Activated CD8-positive, alpha-beta T cell treated with anti-CD3 and anti-CD28 coated beads, Interleukin-2, amount 10 ng/mL, durations not matched to agents 7 days and 5 days (primary cell): ENCODE measurements at regions of chr20 and their contacts with region 1.

Region 1: GRCh38 chr20:5191829-5192569 is 65.2 kb downstream of the CDS2 start:
- DNase-seq: peak; percentile 62
- ATAC-seq: peak; percentile 65
- H3K4me3 Mint-ChIP-seq: no peak overlapping the region
- H3K27ac Mint-ChIP-seq: peak overlapping the region; percentile 60
- H3K4me1 Mint-ChIP-seq: peaks cover 9% of the 10 kb centered on the region
- H3K27me3 Mint-ChIP-seq: no peaks in the 10 kb centered on the region

Region 2: GRCh38 chr20:5056801-5057599 is 135.0 kb before region 1 on chr20:
- CTCF ChIA-PET with region 1: interaction called, 16 read pairs
- POLR2A ChIA-PET with region 1: no interaction called
- DNase-seq: peak; percentile 90
- ATAC-seq: peak; percentile 100
- H3K4me3 Mint-ChIP-seq: no peak overlapping the region
- H3K27ac Mint-ChIP-seq: peak overlapping the region; percentile 87
- H3K4me1 Mint-ChIP-seq: peaks cover 31% of the 10 kb centered on the region
- H3K27me3 Mint-ChIP-seq: peaks cover 1% of the 10 kb centered on the region

Region 3: GRCh38 chr20:5119435-5120188 is 72.4 kb before region 1 on chr20 and contains the start of gene PCNA:
- CTCF ChIA-PET with region 1: interaction called, 115 read pairs
- POLR2A ChIA-PET with region 1: interaction called, 10 read pairs
- DNase-seq: peak; percentile 99
- ATAC-seq: peak; percentile 91
- H3K4me3 Mint-ChIP-seq: peak within 1 kb of the TSS; percentile 91
- H3K27ac Mint-ChIP-seq: peak within 1 kb of the TSS; percentile 97
- H3K4me1 Mint-ChIP-seq: peaks cover 68% of the 10 kb centered on the region
- H3K27me3 Mint-ChIP-seq: no peaks in the 10 kb centered on the region
- total RNA-seq, gene PCNA: 607 to 613 TPM

Region 4: DNA sequence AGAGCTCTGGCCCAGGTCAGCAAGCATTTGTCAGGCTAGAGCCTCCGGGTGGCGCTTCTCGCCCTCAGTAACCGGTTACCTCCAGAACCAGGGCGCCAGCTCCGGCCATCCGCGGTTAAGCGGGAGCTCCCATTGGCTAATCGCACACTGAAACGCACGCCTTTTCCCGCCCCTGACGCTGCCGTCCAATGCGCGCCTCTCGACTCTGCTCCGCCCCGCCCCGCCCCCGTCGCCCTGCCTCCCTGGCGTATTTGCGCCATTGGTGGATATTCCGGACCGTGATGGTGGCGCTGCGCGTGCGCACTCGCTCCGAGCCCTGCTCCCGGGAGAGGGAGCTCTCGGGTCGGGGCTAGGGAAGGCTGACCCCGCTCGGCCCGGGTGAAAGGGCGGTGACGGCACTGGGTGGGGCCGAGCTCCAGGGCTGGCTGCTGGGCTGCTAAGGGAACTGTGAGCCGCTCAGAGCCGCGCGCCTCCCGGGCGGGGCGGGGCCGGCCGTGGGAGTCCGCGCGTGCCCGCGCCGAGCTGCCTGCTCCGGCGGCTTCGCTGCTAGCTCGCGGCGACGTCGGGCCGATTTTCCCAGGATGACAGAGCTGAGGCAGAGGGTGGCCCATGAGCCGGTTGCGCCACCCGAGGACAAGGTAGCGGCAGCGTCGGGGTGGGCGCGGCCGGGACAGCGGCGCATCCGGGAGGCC is 65.3 kb before region 1 on chr20 and contains the start of gene CDS2:
- CTCF ChIA-PET with region 1: interaction called, 115 read pairs
- POLR2A ChIA-PET with region 1: interaction called, 19 read pairs
- DNase-seq: peak; percentile 100
- ATAC-seq: peak; percentile 95
- H3K4me3 Mint-ChIP-seq: peak within 1 kb of the TSS; percentile 87
- H3K27ac Mint-ChIP-seq: peak within 1 kb of the TSS; percentile 98
- H3K4me1 Mint-ChIP-seq: peaks cover 52% of the 10 kb centered on the region
- H3K27me3 Mint-ChIP-seq: no peaks in the 10 kb centered on the region
- total RNA-seq, gene CDS2: 56.2 to 58.3 TPM

Region 5: GRCh38 chr20:5153612-5154542 is 38.1 kb before region 1 on chr20:
- CTCF ChIA-PET with region 1: interaction called, 10 read pairs
- POLR2A ChIA-PET with region 1: no interaction called
- DNase-seq: no peak
- ATAC-seq: no peak
- H3K4me3 Mint-ChIP-seq: no peak overlapping the region
- H3K27ac Mint-ChIP-seq: no peak overlapping the region
- H3K4me1 Mint-ChIP-seq: peaks cover 28% of the 10 kb centered on the region
- H3K27me3 Mint-ChIP-seq: no peaks in the 10 kb centered on the region

Region 6: DNA sequence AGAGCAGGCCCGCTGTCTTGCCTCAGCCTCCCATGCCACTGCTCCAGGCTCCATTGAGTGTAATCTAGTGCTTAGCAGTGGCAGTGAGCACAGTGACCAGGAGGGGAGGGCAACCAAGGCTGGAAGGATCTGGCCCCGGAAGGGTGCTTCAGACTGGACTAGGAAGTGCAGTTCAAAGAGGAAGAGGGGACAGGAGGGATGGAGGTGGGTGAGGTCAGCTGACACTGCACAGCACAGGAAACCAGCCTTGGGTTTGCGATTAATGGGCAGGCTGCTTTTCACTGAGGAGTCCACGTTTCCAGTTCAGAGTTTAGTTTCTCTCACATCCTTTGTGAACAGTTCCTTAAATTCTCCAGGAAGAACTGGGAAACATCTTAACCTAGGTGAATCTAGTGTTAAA is 18.2 kb before region 1 on chr20:
- CTCF ChIA-PET with region 1: interaction called, 12 read pairs
- POLR2A ChIA-PET with region 1: interaction called, 3 read pairs
- DNase-seq: no peak
- ATAC-seq: no peak
- H3K4me3 Mint-ChIP-seq: no peak overlapping the region
- H3K27ac Mint-ChIP-seq: peak overlapping the region; percentile 53
- H3K4me1 Mint-ChIP-seq: peaks cover 31% of the 10 kb centered on the region
- H3K27me3 Mint-ChIP-seq: no peaks in the 10 kb centered on the region

Region 7: DNA sequence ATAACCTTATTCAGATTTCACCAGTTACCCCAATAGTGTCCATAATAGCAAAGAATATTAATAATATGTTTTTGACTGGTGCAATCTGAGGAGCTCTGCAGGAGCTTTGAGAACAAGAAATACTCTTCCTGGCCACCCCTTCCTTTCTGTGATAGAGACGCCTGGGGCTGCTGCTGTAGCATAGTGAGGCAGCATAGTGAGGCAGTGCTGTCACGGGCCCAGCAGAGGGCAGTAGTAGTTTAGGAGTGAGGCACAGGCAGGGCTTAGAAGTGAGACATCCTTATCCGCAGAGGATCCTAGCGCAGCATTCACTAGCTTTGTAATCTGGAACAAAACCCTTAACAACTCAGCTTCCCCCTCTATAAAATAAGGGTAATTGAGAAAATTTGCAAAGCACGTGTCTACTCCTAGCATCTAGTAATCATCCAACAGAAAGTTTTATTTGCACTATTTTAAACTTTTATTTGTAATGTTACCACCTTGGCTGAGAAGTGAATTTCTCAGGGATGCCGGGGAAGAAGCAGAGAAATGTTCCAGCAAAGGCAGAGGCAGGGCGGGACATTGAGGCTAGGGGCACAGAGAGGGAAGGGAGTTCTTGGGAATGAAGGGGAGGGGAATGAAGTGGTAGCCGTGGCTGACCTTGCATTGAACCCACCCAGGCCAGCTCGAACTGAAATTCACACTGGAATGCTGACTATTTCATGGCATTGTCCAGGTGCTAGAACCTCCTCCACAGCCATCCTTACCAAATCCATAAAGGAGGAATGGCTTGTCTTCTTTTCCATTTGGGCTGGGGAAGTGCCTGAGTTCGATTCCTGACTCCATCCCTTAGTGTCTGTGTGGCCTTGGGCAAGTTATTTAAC is 13.6 kb after region 1 on chr20:
- CTCF ChIA-PET with region 1: interaction called, 34 read pairs
- POLR2A ChIA-PET with region 1: no interaction called
- DNase-seq: peak; percentile 79
- ATAC-seq: peak; percentile 97
- H3K4me3 Mint-ChIP-seq: no peak overlapping the region
- H3K27ac Mint-ChIP-seq: no peak overlapping the region
- H3K4me1 Mint-ChIP-seq: no peaks in the 10 kb centered on the region
- H3K27me3 Mint-ChIP-seq: no peaks in the 10 kb centered on the region